Activated CD4-positive, alpha-beta memory T cell treated with anti-CD3 and anti-CD28 coated beads, Interleukin-2, amount 10 ng/mL, durations not matched to agents 7 days and 5 days (primary cell): ENCODE measurements at regions of chr2 and their contacts with region 1.

Region 1: DNA sequence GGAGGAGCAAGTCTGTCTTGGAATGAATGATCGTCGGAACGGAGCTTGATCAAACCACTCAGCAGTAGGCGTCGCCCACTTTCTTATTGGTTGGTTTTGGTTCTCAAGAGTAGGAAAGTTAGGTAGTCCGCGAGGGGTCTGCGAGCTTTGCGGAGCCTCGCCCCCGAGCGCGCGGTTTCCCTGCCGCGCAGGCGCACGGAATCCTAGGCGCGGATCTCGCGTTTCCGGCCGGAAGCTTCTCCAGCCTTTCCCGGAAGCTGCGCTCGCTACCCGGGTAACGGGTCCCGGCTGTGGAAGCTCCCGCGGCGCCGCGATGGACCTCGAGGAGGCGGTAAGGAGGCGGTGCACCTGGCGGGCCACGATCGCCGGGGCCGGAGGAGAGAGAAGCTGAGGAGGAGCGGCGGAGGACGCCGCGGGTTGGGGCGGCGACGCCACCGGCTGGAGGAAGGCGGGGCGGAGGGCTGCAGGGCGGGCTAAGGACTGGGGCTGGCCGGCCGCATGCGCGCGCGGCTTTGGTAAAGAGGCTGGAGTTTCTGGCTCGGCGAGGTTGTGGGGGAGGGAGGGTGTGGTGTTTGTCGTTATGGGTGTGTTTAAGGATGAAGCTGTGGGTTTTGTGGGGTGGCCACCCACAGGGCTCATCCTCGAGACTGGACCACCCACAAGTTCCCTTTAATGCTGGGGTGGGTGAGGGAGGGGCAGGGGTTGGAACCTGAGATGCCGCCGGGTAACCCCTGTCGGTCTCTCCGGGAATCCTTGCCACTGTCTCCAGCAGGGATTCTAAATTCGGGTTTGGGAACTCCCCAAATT is at the start of gene TAF1B:
- DNase-seq: peak; percentile 91
- H3K4me3 Mint-ChIP-seq: peak within 1 kb of the TSS; percentile 87
- H3K27ac Mint-ChIP-seq: peak within 1 kb of the TSS; percentile 87
- H3K4me1 Mint-ChIP-seq: peaks cover 49% of the 10 kb centered on the region
- H3K27me3 Mint-ChIP-seq: no peaks in the 10 kb centered on the region
- total RNA-seq, gene TAF1B: 49.4 to 54.7 TPM

Region 2: DNA sequence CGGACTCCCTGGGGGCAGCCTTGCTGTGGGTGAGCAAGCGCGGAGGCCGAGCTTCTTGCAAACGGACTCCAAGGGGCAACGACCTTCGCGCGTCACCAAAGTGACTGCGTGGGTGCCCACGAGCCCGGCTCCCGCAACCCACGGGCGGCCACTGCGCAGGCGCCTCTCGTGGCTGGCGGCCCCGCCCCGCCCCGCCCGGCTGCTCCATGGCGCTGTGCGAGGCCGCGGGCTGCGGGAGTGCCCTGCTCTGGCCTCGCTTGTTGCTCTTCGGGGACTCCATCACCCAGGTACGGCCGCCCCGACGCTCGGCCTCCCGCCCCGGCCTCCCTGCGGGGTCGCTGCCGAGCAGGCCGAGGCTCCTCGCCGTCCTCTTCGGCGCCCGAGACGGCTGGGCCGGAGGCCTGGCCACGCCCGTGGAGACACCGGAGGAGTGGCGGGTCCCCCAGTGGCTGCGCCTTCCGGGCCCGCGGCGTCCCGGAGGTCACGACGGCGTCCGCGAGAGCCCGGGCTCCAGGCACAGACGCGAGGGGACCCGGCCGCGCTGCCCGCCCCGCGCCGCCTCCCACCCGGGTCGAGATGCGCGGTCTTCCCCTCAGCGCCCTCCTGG is 369.0 kb before region 1 on chr2 and contains the start of gene IAH1:
- CTCF ChIA-PET with region 1: no interaction called
- POLR2A ChIA-PET with region 1: interaction called, 10 read pairs
- DNase-seq: peak; percentile 76
- H3K4me3 Mint-ChIP-seq: peak within 1 kb of the TSS; percentile 79
- H3K27ac Mint-ChIP-seq: peak within 1 kb of the TSS; percentile 80
- H3K4me1 Mint-ChIP-seq: peaks cover 52% of the 10 kb centered on the region
- H3K27me3 Mint-ChIP-seq: no peaks in the 10 kb centered on the region
- total RNA-seq, gene IAH1: 69.2 to 79.0 TPM

Region 3: DNA sequence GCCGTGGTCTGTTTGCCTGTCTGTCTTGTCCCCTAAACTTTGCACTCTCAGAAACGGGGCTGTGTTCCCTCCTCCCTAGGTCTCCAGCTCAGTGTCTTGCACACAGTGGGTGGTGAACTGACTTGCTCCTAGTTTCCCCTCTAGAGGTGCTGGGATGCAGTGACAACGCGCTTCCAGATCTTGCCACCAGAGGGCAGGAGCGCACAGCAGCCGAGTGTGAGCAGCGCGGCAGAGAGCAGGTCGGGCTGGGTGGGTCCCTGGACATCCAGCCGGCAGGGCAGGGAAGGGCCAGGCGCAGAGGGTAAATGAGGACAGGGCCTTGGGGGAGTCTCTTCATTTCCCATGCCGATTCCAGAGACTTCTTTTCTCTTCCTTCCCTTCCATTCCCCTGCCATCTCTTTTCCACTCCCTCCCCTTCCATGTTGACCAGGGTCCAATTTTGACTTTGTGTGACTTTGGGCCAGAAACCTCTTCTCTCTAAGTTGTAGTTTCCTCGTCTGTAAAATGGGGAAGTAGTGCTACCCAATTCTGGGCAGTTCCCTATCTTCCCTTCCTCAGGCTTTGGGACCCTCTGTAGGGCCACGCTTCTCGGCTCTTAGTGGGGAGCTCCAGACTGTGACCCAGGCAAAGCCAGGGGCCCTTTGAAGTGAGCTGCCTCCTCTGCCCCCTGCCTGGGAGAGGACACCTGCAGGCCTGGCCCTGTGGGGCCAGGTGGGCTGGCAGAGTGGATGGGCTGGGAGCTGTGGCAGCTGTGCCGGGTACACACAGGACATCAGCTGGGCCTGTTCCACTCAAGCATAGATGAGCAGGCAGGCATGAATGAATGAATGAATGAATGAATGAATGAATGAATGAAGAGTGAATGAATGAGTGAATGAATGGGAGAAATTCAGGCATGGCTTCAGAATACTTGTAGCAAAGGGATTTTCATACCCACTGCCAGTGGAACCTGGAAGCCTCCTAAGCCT is 43.5 kb before region 1 on chr2:
- CTCF ChIA-PET with region 1: interaction called, 42 read pairs
- POLR2A ChIA-PET with region 1: interaction called, 47 read pairs
- DNase-seq: peak; percentile 92
- H3K4me3 Mint-ChIP-seq: peak overlapping the region; percentile 72
- H3K27ac Mint-ChIP-seq: peak overlapping the region; percentile 98
- H3K4me1 Mint-ChIP-seq: peaks cover 49% of the 10 kb centered on the region
- H3K27me3 Mint-ChIP-seq: no peaks in the 10 kb centered on the region

Region 4: DNA sequence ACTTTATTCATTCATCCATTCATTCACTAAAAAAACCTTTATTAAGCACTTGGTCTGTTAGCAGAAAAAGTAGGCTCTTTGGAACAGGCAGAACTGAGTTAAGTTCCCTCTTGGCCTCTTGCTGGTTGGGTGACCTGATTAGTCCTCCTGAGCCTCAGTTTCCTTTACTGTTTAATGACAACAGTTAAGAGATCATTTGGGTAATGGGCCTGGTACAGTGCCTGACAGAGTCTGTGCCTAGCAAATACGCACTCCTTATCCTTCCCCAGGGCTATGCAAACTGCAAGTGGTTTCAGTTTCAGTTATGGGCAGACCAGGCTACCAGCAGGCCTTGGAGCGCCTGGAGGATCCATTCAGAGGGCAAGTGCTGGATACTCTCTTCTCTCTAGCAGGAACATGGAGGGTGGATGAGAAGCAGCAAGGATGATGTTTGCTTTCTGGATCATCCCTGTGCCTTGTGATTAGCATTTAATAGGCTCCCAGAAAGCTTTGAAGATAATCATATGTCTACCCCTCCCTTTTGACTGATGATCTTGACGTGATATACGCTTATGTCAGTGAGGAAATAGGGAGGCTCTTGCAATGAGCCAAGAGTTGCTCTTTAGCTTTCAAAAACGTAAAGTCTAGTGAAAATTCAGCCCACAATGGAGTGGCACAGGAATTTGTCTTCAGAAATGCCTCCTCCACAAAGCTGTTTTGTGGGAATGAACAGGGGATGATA is 12.6 kb before region 1 on chr2:
- CTCF ChIA-PET with region 1: interaction called, 7 read pairs
- POLR2A ChIA-PET with region 1: interaction called, 27 read pairs
- DNase-seq: peak; percentile 37
- H3K4me3 Mint-ChIP-seq: no peak overlapping the region
- H3K27ac Mint-ChIP-seq: peak overlapping the region; percentile 22
- H3K4me1 Mint-ChIP-seq: peaks cover 38% of the 10 kb centered on the region
- H3K27me3 Mint-ChIP-seq: peaks cover 28% of the 10 kb centered on the region

Region 5: GRCh38 chr2:9993488-9994165 is 150.2 kb after region 1 on chr2:
- CTCF ChIA-PET with region 1: no interaction called
- POLR2A ChIA-PET with region 1: no interaction called
- DNase-seq: no peak
- H3K4me3 Mint-ChIP-seq: no peak overlapping the region
- H3K27ac Mint-ChIP-seq: no peak overlapping the region
- H3K4me1 Mint-ChIP-seq: peaks cover 25% of the 10 kb centered on the region
- H3K27me3 Mint-ChIP-seq: peaks cover 1% of the 10 kb centered on the region

Region 6: GRCh38 chr2:10028988-10029874 is 185.8 kb after region 1 on chr2:
- CTCF ChIA-PET with region 1: no interaction called
- POLR2A ChIA-PET with region 1: interaction called, 14 read pairs
- DNase-seq: peak; percentile 77
- H3K4me3 Mint-ChIP-seq: peak overlapping the region; percentile 65
- H3K27ac Mint-ChIP-seq: peak overlapping the region; percentile 79
- H3K4me1 Mint-ChIP-seq: peaks cover 38% of the 10 kb centered on the region
- H3K27me3 Mint-ChIP-seq: no peaks in the 10 kb centered on the region